ENCODE measurements at regions of chr19 and their contacts with region 1.

Region 1: DNA sequence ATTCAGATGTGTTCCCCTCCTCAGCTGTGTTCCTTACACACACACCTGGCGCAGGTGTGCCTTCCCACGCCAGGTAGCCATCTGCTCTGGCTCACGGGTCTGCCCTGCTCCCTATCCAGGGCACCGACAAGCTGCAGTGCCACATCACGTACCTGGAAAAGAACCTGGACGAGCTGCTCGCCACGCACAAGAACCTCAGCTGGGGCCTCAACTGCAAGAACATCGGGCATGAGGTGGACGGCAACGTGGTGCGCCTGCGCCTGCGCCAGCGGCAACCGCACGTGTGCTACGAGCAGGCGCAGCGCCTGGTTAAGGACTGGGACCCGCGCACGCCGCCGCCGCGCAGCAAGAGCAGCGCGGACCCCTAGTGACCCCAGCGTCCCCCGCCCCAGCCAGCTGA is 26.5 kb upstream of the CASP14 start:
- DNase-seq: no peak
- H3K4me3 ChIP-seq: no peak overlapping the region
- H3K4me3 Mint-ChIP-seq: no peak overlapping the region
- H3K27ac Mint-ChIP-seq: no peak overlapping the region
- H3K4me1 ChIP-seq: no peaks in the 10 kb centered on the region
- H3K4me1 Mint-ChIP-seq: no peaks in the 10 kb centered on the region
- H3K27me3 ChIP-seq: peaks cover 3% of the 10 kb centered on the region
- H3K27me3 Mint-ChIP-seq: peaks cover 4% of the 10 kb centered on the region
- CTCF ChIP-seq: no peak

Region 2: GRCh38 chr19:16153582-16154336 is 1131.0 kb after region 1 on chr19:
- CTCF ChIA-PET with region 1: interaction called, 12 read pairs
- POLR2A ChIA-PET with region 1: no interaction called
- intact Hi-C with region 1: no loop called
- DNase-seq: no peak
- H3K4me3 ChIP-seq: no peak overlapping the region
- H3K4me3 Mint-ChIP-seq: no peak overlapping the region
- H3K27ac Mint-ChIP-seq: no peak overlapping the region
- H3K4me1 ChIP-seq: no peaks in the 10 kb centered on the region
- H3K4me1 Mint-ChIP-seq: no peaks in the 10 kb centered on the region
- H3K27me3 ChIP-seq: no peaks in the 10 kb centered on the region
- H3K27me3 Mint-ChIP-seq: no peaks in the 10 kb centered on the region
- CTCF ChIP-seq: no peak

Measured in Caco-2 (cell line).